PC-3 (cell line): ENCODE measurements at regions of chr2 and their contacts with region 1.

Region 1: GRCh38 chr2:61538200-61538919 is at the start of gene XPO1:
- DNase-seq: peak; percentile 99
- ATAC-seq: peak; percentile 82
- H3K4me3 ChIP-seq: peak within 1 kb of the TSS; percentile 94
- H3K27ac ChIP-seq: peak within 1 kb of the TSS; percentile 93
- H3K4me1 ChIP-seq: peaks cover 25% of the 10 kb centered on the region
- H3K27me3 ChIP-seq: no peaks in the 10 kb centered on the region
- CTCF ChIP-seq: no peak
- total RNA-seq, gene XPO1: 138 and 170 TPM in 2 replicates

Region 2: GRCh38 chr2:61470965-61471904 is 67.1 kb before region 1 on chr2 and contains the start of gene USP34:
- CTCF ChIA-PET with region 1: no interaction called
- POLR2A ChIA-PET with region 1: no interaction called
- intact Hi-C with region 1: loop called (anchors 1 kb)
- DNase-seq: peak; percentile 90
- ATAC-seq: peak; percentile 81
- H3K4me3 ChIP-seq: peak within 1 kb of the TSS; percentile 82
- H3K27ac ChIP-seq: peak within 1 kb of the TSS; percentile 87
- H3K4me1 ChIP-seq: peaks cover 12% of the 10 kb centered on the region
- H3K27me3 ChIP-seq: no peaks in the 10 kb centered on the region
- CTCF ChIP-seq: no peak
- total RNA-seq, gene USP34: 67.1 and 74.5 TPM in 2 replicates

Region 3: DNA sequence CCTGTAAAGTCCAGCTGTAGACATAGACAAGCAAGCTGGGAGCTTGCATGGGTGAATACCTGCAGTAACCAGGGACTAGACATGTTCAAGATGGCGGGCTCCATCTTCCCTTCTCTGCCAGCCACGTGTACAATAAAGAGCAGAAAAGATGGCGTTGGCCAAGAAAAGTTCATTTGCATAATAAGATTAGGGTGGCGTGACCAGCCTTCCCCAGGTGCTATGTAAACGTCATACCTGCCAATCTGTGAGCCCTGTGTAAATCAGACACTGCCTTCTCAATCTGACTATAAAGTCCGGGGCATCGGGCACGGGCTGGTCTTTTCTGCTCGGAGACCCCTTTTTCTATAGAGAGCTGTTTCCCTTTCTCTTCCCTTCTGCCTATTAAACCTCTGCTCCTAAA is 101.4 kb after region 1 on chr2:
- CTCF ChIA-PET with region 1: interaction called, 4 read pairs
- POLR2A ChIA-PET with region 1: no interaction called
- intact Hi-C with region 1: loop called (anchors 5 kb)
- DNase-seq: no peak
- ATAC-seq: no peak
- H3K4me3 ChIP-seq: no peak overlapping the region
- H3K27ac ChIP-seq: no peak overlapping the region
- H3K4me1 ChIP-seq: peaks cover 8% of the 10 kb centered on the region
- H3K27me3 ChIP-seq: no peaks in the 10 kb centered on the region
- CTCF ChIP-seq: no peak

Region 4: GRCh38 chr2:61854474-61855182 is 316.3 kb after region 1 on chr2:
- CTCF ChIA-PET with region 1: no interaction called
- POLR2A ChIA-PET with region 1: no interaction called
- intact Hi-C with region 1: loop called (anchors 10 kb)
- DNase-seq: peak; percentile 98
- ATAC-seq: peak; percentile 82
- H3K4me3 ChIP-seq: peak overlapping the region; percentile 84
- H3K27ac ChIP-seq: peak overlapping the region; percentile 50
- H3K4me1 ChIP-seq: peaks cover 5% of the 10 kb centered on the region; the same call in 1 of the 2 replicates
- H3K27me3 ChIP-seq: no peaks in the 10 kb centered on the region
- CTCF ChIP-seq: no peak

Region 5: GRCh38 chr2:61888267-61889055 is 350.1 kb after region 1 on chr2 and contains the start of gene CCT4:
- CTCF ChIA-PET with region 1: no interaction called
- POLR2A ChIA-PET with region 1: no interaction called
- intact Hi-C with region 1: loop called (anchors 10 kb)
- DNase-seq: peak; percentile 81
- ATAC-seq: peak; percentile 79
- H3K4me3 ChIP-seq: peak within 1 kb of the TSS; percentile 99
- H3K27ac ChIP-seq: peak within 1 kb of the TSS; percentile 73
- H3K4me1 ChIP-seq: peaks cover 21% of the 10 kb centered on the region
- H3K27me3 ChIP-seq: no peaks in the 10 kb centered on the region
- CTCF ChIP-seq: no peak
- total RNA-seq, gene CCT4: 185 and 195 TPM in 2 replicates